Activated CD4-positive, alpha-beta T cell treated with anti-CD3 and anti-CD28 coated beads for 36 hours (primary cell): ENCODE measurements at regions of chr1 and their contacts with region 1.

Region 1: GRCh38 chr1:26560403-26560780 is 30.8 kb downstream of the RPS6KA1 start:
- DNase-seq: no peak
- ATAC-seq: no peak
- H3K4me3 Mint-ChIP-seq: no peak overlapping the region
- H3K27ac Mint-ChIP-seq: no peak overlapping the region
- H3K4me1 Mint-ChIP-seq: peaks cover 2% of the 10 kb centered on the region
- H3K27me3 Mint-ChIP-seq: no peaks in the 10 kb centered on the region

Region 2: DNA sequence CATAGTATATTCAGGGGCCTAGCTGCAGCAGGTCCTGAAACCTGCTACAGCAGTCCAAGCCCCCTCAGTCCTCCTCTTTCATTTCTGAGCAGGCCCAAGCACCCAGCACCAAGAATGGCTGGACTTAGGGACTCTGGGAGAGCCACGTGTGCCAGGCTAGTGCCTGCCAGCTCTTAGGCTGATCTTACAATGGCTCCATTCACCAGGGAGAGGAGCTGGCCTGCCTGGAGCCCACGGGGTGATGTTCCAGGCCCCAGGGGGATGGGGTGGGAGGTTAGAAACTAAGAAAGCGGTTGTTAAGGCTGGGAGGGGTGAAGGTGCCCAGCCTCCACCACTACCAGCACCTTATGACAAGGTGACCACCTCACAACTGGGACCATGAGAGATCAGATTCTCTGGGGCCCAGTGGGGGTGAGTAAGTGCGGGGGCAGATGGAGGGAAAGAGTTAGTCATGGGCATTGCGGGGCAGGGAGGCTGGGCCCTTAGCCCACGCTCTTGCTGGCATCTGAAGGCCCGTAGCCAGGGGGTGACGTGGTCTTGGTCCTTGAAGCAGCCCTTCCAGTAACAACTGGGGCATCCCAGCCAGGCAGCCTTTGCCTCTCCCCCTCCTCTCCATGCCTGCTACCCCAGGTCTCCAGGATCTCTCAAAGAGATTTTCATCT is 1845.4 kb before region 1 on chr1:
- CTCF ChIA-PET with region 1: no interaction called
- POLR2A ChIA-PET with region 1: no interaction called
- intact Hi-C with region 1: loop called in 1 of 2 experiments (anchors 10 kb)
- DNase-seq: peak; percentile 62
- ATAC-seq: peak; percentile 79
- H3K4me3 Mint-ChIP-seq: no peak overlapping the region
- H3K27ac Mint-ChIP-seq: peak overlapping the region; percentile 72
- H3K4me1 Mint-ChIP-seq: peaks cover 7% of the 10 kb centered on the region
- H3K27me3 Mint-ChIP-seq: no peaks in the 10 kb centered on the region